SK-N-SH (cell line): ENCODE measurements at regions of chr7 and their contacts with region 1.

Region 1: DNA sequence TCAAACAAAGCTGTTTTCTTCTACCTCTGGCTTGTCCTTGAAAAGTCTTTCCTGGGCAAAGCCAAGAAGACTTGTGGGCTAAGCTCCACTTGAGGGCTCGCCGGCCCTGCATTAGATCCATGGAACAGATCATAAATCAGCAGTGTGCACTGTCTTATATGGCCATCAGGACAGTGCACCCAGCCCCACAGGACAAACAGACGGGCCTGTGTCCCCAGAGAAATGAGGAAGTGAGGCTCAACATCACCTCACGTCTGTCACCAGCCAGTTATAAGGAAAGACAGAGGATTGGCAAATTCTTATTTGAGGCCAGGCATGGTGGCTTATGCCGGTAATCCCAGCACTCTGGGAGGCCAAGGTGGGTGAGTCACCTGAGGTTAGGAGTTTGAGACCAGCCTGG is 12.3 kb upstream of the IFT22 start:
- DNase-seq: peak; percentile 10
- H3K4me3 ChIP-seq: no peak overlapping the region
- H3K27ac ChIP-seq: no peak overlapping the region
- H3K4me1 ChIP-seq: peaks cover 0 to 3% of the 10 kb centered on the region in 2 experiments; a peak in 1 of 4 replicates
- H3K27me3 ChIP-seq: peaks cover 7% of the 10 kb centered on the region; the same call in 1 of the 2 replicates
- CTCF ChIP-seq: no peak
- EP300 ChIP-seq: no peak
- RAD21 ChIP-seq: no peak

Region 2: DNA sequence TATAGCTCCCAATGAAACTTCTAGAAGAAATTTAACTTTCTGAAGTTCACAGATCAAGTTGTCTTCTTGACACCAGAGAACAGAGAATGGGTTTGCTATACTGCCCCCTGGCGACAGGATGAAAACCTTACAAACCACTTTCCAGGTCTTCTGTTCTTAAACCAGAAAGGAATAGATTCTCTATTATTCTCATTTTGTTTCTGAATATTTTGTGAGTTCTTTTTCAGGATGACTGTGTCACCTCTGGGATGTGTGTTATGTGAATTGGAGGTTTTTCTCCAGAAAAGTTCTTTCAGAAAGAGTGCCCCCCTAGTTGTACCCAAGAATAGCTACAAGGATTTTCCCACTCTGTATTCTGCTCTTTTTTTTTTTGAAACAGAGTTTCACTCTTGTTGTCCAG is 18.6 kb before region 1 on chr7:
- CTCF ChIA-PET with region 1: interaction called, 11 read pairs
- POLR2A ChIA-PET with region 1: no interaction called
- DNase-seq: peak; percentile 58
- H3K4me3 ChIP-seq: no peak overlapping the region; a peak in 1 of 4 replicates
- H3K27ac ChIP-seq: no peak overlapping the region
- H3K4me1 ChIP-seq: no peaks in the 10 kb centered on the region
- H3K27me3 ChIP-seq: no peaks in the 10 kb centered on the region
- CTCF ChIP-seq: peak; percentile 85
- EP300 ChIP-seq: no peak
- RAD21 ChIP-seq: no peak; the same call in 1 of the 2 replicates